Psoas muscle (tissue), 8 donors: ENCODE measurements at regions of chr15 and their contacts with region 1.

Region 1: GRCh38 chr15:93030430-93031105 is 58.4 kb downstream of the RGMA start:
- DNase-seq: peak; percentile 71 to 87
- ATAC-seq: peak; percentile 60 to 71 (median 64)
- H3K4me3 ChIP-seq: peak overlapping the region; percentile 37
- H3K27ac ChIP-seq: peak overlapping the region; percentile 90
- H3K4me1 ChIP-seq: peaks cover 55% of the 10 kb centered on the region
- H3K27me3 ChIP-seq: no peaks in the 10 kb centered on the region
- CTCF ChIP-seq: peak; percentile 83

Region 2: DNA sequence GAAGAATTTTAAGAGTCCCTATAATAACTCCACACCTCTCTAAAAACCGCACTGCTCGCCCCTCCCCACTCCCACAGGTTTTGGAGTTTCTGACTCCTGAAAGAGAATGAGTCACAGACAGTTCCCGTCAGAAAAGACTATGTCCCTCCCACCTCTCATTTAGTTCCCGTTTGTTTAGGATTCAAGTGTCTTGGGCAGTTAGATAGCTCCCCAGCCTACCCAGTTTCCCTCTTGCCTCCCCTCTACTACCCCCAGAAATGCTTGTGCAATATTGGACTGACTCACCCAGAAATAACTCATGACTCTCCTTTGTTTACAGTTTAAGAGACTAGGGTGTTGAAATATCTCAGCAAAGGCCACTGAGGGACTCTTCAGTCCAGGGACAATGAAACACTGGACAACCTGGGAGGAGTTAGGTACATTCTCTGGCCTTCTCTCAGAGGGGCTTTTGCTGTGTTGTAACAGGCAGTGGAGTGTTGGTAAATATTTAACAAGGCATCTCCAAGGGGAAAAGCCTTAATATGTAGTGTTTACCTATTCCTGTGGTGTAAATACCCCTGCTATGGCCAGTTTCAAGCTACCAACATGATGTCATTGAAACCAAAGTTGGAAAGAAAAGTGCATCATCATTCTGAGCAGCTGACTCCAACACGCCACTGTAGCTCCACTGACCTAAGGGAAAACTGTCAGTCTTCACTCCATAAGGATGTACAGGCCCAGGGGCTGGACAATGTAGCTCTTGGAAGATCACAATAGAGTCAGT is 226.5 kb before region 1 on chr15:
- intact Hi-C with region 1: loop called (anchors 5 to 10 kb)
- DNase-seq: peak; percentile 82 to 86
- ATAC-seq: peak; percentile 79 to 90 (median 84)
- H3K4me3 ChIP-seq: no peak overlapping the region
- H3K27ac ChIP-seq: peak overlapping the region; percentile 92
- H3K4me1 ChIP-seq: peaks cover 38% of the 10 kb centered on the region
- H3K27me3 ChIP-seq: no peaks in the 10 kb centered on the region
- CTCF ChIP-seq: no peak

Region 3: GRCh38 chr15:93072411-93073394 is 42.1 kb after region 1 on chr15:
- intact Hi-C with region 1: no loop called
- DNase-seq: peak; percentile 90 to 94
- ATAC-seq: peak; percentile 74 to 90 (median 81)
- H3K4me3 ChIP-seq: peak overlapping the region; percentile 87
- H3K27ac ChIP-seq: peak overlapping the region; percentile 87
- H3K4me1 ChIP-seq: peaks cover 84% of the 10 kb centered on the region
- H3K27me3 ChIP-seq: no peaks in the 10 kb centered on the region
- CTCF ChIP-seq: no peak

Region 4: GRCh38 chr15:93152951-93153350 is 122.4 kb after region 1 on chr15:
- intact Hi-C with region 1: loop called in 1 of 2 experiments (anchors 10 kb)
- DNase-seq: peak; percentile 66 to 86
- ATAC-seq: peak; percentile 39 to 88 (median 84)
- H3K4me3 ChIP-seq: no peak overlapping the region
- H3K27ac ChIP-seq: no peak overlapping the region
- H3K4me1 ChIP-seq: peaks cover 16% of the 10 kb centered on the region
- H3K27me3 ChIP-seq: no peaks in the 10 kb centered on the region
- CTCF ChIP-seq: no peak

Region 5: GRCh38 chr15:93617443-93617842 is 586.9 kb after region 1 on chr15:
- intact Hi-C with region 1: loop called (anchors 2 to 10 kb)
- DNase-seq: peak; percentile 14 to 57
- ATAC-seq: peak; percentile 65 to 92 (median 86)
- H3K4me3 ChIP-seq: no peak overlapping the region
- H3K27ac ChIP-seq: no peak overlapping the region
- H3K4me1 ChIP-seq: no peaks in the 10 kb centered on the region
- H3K27me3 ChIP-seq: no peaks in the 10 kb centered on the region
- CTCF ChIP-seq: peak; percentile 49

Region 6: DNA sequence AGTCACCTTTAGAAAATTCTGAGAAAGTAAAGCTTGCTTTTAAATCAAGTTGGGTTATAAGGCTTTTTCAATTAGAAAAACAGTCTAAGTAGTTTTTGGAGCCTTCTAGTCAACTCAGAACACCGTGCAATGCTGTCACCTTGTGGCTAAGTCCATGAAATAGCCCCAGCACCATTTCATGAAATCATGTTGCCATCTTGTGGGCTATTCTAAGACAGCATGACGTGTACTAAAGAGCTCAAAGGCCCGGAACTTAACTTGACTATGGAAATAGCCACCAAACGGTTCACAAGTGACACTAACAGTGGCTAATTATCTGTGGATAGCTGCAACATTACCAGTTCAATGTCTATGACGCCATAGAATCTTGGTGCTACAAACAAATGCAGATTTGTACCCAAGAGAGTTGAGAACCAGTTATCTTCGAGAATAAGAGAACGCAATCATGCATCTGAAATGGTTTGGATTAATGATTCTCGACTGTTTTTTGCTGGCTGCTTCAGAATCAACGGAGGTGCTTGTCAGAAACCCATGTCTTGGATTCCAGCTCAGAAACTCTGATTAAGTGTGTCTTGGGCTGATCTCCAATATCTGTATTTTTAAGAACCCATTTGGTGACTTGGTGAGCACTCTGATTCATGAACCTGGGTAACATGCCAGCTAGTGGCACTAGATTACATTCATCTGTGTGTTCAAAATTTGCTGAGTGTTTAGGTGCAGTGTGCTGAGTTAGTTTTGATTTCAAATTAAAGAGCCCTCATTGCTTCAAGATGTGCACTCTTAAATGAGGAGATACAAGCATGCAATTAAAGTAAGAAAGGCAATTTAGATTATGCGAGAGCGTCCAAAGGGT is 1089.6 kb after region 1 on chr15:
- intact Hi-C with region 1: loop called (anchors 1 to 5 kb)
- DNase-seq: peak in 1 of 2 donors; percentile 25
- ATAC-seq: peak; percentile 99 to 100 (median 99)
- H3K4me3 ChIP-seq: no peak overlapping the region
- H3K27ac ChIP-seq: peak overlapping the region; percentile 13
- H3K4me1 ChIP-seq: no peaks in the 10 kb centered on the region
- H3K27me3 ChIP-seq: no peaks in the 10 kb centered on the region
- CTCF ChIP-seq: peak; percentile 90